Ovary (tissue), 10 donors: ENCODE measurements at regions of chr9 and their contacts with region 1.

Region 1: GRCh38 chr9:104863180-104863883 is 64.6 kb downstream of the ABCA1 start:
- DNase-seq: peak; percentile 50 to 57 (median 52)
- H3K4me3 ChIP-seq: no peak overlapping the region
- H3K27ac ChIP-seq: peak overlapping the region in 1 of 2 donors; percentile 10
- H3K4me1 ChIP-seq: peaks cover 23% of the 10 kb centered on the region
- H3K27me3 ChIP-seq: no peaks in the 10 kb centered on the region
- CTCF ChIP-seq: peak; percentile 28 to 73 (median 42)
- EP300 ChIP-seq: no peak
- POLR2A ChIP-seq: no peak

Region 2: DNA sequence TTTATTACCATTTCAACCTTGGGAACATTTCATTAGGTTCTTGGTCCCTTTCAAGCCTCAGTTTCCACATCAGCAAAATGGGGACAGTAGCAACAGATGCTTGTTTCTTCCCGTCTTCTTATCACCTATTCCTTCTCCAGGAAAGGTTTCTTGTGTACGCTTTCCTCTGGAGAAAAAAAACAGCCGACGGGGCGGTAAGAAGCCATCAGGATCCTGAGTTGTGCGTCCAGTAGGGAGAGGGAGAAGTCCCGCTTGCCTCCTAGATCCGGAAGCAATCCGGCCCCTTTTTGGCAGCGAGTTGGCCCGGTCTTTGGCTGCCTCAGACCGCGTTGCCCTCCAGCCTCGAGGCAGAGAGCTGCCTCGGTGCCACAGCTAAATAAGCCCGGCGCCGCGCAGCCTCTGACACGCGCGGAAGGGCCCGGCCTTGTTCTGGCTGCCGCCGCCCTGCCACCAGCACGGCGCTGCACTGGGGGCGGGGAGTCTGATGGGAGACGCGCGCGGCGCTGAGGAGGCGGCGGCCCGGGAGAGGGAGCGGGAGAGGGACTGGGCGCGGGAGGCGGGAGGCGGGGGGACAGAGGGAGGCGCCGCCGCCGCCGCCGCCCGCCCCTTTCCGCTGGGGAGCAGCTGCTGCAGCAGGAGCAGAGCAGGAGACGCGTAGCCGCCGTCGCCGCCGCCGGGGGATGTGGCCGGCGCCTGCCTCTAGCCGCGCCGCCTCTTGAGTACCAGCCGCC is 380.8 kb after region 1 on chr9 and contains the start of gene SLC44A1:
- intact Hi-C with region 1: loop called in 1 of 4 experiments (anchors 10 kb)
- DNase-seq: peak; percentile 95 to 96 (median 96)
- H3K4me3 ChIP-seq: peak within 1 kb of the TSS; percentile 88
- H3K27ac ChIP-seq: peak within 1 kb of the TSS; percentile 26 to 56
- H3K4me1 ChIP-seq: peaks cover 1% of the 10 kb centered on the region
- H3K27me3 ChIP-seq: no peaks in the 10 kb centered on the region
- CTCF ChIP-seq: no peak
- EP300 ChIP-seq: no peak
- POLR2A ChIP-seq: peak; percentile 43
- total RNA-seq, gene SLC44A1: 19.1 to 34.7 (median 30.0) TPM

Region 3: GRCh38 chr9:105414947-105415661 is 551.8 kb after region 1 on chr9:
- intact Hi-C with region 1: loop called in 1 of 4 experiments (anchors 5 kb)
- DNase-seq: peak; percentile 44 to 73 (median 58)
- H3K4me3 ChIP-seq: no peak overlapping the region
- H3K27ac ChIP-seq: no peak overlapping the region
- H3K4me1 ChIP-seq: peaks cover 2% of the 10 kb centered on the region
- H3K27me3 ChIP-seq: no peaks in the 10 kb centered on the region
- CTCF ChIP-seq: peak; percentile 75 to 86 (median 81)
- EP300 ChIP-seq: no peak
- POLR2A ChIP-seq: no peak